SK-N-SH (cell line): ENCODE measurements at regions of chr1 and their contacts with region 1.

Region 1: GRCh38 chr1:110524311-110525251 is 5.6 kb upstream of the KCNA10 start:
- DNase-seq: peak; percentile 80
- H3K4me3 ChIP-seq: no peak overlapping the region; a peak in 1 of 4 replicates
- H3K27ac ChIP-seq: no peak overlapping the region
- H3K4me1 ChIP-seq: no peaks in the 10 kb centered on the region; a peak in 1 of 4 replicates
- H3K27me3 ChIP-seq: no peaks in the 10 kb centered on the region; the same call in 1 of the 2 replicates
- CTCF ChIP-seq: peak; percentile 65
- EP300 ChIP-seq: no peak
- RAD21 ChIP-seq: peak; percentile 90

Region 2: GRCh38 chr1:110508038-110508940 is 16.3 kb before region 1 on chr1:
- CTCF ChIA-PET with region 1: interaction called, 86 read pairs
- POLR2A ChIA-PET with region 1: no interaction called
- DNase-seq: no peak
- H3K4me3 ChIP-seq: no peak overlapping the region
- H3K27ac ChIP-seq: no peak overlapping the region
- H3K4me1 ChIP-seq: peaks cover 0 to 4% of the 10 kb centered on the region in 2 experiments; a peak in 1 of 4 replicates
- H3K27me3 ChIP-seq: no peaks in the 10 kb centered on the region; the same call in 1 of the 2 replicates
- CTCF ChIP-seq: no peak
- EP300 ChIP-seq: no peak
- RAD21 ChIP-seq: no peak

Region 3: GRCh38 chr1:110535985-110536384 is 11.4 kb after region 1 on chr1:
- CTCF ChIA-PET with region 1: interaction called, 56 read pairs
- POLR2A ChIA-PET with region 1: no interaction called
- DNase-seq: no peak
- H3K4me3 ChIP-seq: no peak overlapping the region
- H3K27ac ChIP-seq: no peak overlapping the region
- H3K4me1 ChIP-seq: no peaks in the 10 kb centered on the region; a peak in 1 of 4 replicates
- H3K27me3 ChIP-seq: no peaks in the 10 kb centered on the region
- CTCF ChIP-seq: no peak
- EP300 ChIP-seq: no peak
- RAD21 ChIP-seq: no peak

Region 4: GRCh38 chr1:110542725-110543124 is 18.1 kb after region 1 on chr1:
- CTCF ChIA-PET with region 1: interaction called, 45 read pairs
- POLR2A ChIA-PET with region 1: no interaction called
- DNase-seq: no peak
- H3K4me3 ChIP-seq: no peak overlapping the region
- H3K27ac ChIP-seq: no peak overlapping the region
- H3K4me1 ChIP-seq: no peaks in the 10 kb centered on the region
- H3K27me3 ChIP-seq: no peaks in the 10 kb centered on the region
- CTCF ChIP-seq: no peak
- EP300 ChIP-seq: no peak
- RAD21 ChIP-seq: no peak

Region 5: GRCh38 chr1:110548381-110548780 is 23.8 kb after region 1 on chr1:
- CTCF ChIA-PET with region 1: interaction called, 88 read pairs
- POLR2A ChIA-PET with region 1: no interaction called
- DNase-seq: peak; percentile 51
- H3K4me3 ChIP-seq: no peak overlapping the region
- H3K27ac ChIP-seq: no peak overlapping the region
- H3K4me1 ChIP-seq: no peaks in the 10 kb centered on the region
- H3K27me3 ChIP-seq: peaks cover 9% of the 10 kb centered on the region; the same call in 1 of the 2 replicates
- CTCF ChIP-seq: peak; percentile 39
- EP300 ChIP-seq: no peak
- RAD21 ChIP-seq: peak; percentile 59

Region 6: GRCh38 chr1:110565565-110565964 is 41.0 kb after region 1 on chr1:
- CTCF ChIA-PET with region 1: interaction called, 12 read pairs
- POLR2A ChIA-PET with region 1: no interaction called
- DNase-seq: no peak
- H3K4me3 ChIP-seq: no peak overlapping the region
- H3K27ac ChIP-seq: no peak overlapping the region
- H3K4me1 ChIP-seq: no peaks in the 10 kb centered on the region; a peak in 1 of 4 replicates
- H3K27me3 ChIP-seq: no peaks in the 10 kb centered on the region
- CTCF ChIP-seq: no peak
- EP300 ChIP-seq: no peak
- RAD21 ChIP-seq: no peak

Region 7: GRCh38 chr1:110605901-110606656 is 81.5 kb after region 1 on chr1 and contains the start of gene KCNA2:
- CTCF ChIA-PET with region 1: interaction called, 242 read pairs
- POLR2A ChIA-PET with region 1: no interaction called
- DNase-seq: peak; percentile 88
- H3K4me3 ChIP-seq: peak within 1 kb of the TSS; percentile 43 to 56
- H3K27ac ChIP-seq: no peak within 1 kb of the TSS
- H3K4me1 ChIP-seq: peaks cover 0 to 10% of the 10 kb centered on the region in 2 experiments; a peak in 2 of 4 replicates
- H3K27me3 ChIP-seq: peaks cover 60% of the 10 kb centered on the region
- CTCF ChIP-seq: no peak
- EP300 ChIP-seq: no peak
- RAD21 ChIP-seq: no peak
- polyA plus RNA-seq, gene KCNA2: not detected in 2 replicates